Activated T-helper 1 cell treated with anti-CD3 and anti-CD28 coated beads, Interleukin-12 subunit alpha, Interleukin-12 subunit beta, Interleukin-2, Interleukin-4 antibody, amounts not matched to agents 30 ng/mL and 10 ng/mL and 1 ng/mL, durations not matched to agents 14 hours and 24 hours and 36 hours (primary cell): ENCODE measurements at regions of chr11 and their contacts with region 1.

Region 1: DNA sequence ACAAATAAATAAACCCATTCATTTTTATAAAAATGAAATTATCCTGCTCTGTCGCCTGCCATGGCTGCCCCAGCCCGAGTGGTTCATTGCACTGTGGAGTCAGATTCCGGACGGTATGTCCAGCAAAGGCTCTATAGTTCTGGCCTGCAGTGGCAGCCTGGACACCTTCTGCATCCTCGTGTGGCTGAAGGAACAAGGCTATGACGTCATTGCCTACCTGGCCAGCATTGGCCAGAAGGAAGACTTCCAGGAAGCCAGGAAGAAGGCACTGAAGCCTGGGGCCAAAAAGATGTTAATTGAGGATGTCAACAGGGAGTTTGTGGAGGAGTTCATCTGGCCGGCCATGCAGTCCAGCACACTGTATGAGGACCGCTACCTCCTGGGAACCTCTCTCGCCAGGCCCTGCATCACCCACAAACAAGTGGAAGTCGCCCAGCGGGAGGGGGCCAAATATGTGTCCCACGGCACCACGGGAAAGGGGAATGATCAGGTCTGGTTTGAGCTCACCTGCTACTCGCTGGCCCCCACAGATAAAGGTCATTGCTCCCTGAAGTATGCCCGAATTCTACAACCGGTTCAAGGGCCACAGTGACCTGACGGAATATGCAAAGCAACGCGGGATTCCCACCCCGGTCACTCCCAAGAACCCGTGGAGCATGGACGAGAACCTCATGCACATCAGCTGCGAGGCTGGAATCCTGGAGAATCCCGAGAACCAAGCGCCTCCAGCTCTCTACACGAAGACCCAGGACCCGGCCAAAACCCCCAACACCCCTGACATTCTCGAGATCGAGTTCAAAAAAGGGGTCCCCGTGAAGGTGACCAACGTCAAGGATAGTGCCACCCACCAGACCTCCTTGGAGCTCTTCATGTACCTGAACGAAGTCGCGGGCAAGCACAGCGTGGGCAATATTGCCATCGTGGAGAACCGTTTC is 158.2 kb upstream of the GUCY1A2 start:
- DNase-seq: no peak
- H3K4me3 Mint-ChIP-seq: no peak overlapping the region
- H3K27ac Mint-ChIP-seq: no peak overlapping the region
- H3K4me1 Mint-ChIP-seq: no peaks in the 10 kb centered on the region
- H3K27me3 Mint-ChIP-seq: no peaks in the 10 kb centered on the region

Region 2: DNA sequence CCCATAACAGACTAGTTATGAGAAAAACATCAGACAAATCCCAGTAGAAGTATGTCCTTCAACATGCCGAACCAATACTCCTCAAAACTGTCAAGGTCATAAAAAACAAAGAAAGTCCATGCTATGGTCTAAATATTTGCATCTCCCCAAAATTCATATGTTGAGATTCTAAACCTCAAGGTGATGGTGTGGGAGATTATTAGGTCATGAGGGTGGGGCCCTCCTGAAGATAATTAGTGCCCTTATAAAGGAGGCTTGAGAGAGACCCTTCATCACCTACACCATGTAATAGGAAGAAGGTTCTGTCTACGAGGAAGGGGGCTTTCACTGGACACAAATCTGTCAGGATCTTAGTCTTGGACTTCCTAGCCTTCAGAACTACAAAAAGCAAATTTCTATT is 39.5 kb before region 1 on chr11:
- intact Hi-C with region 1: loop called (anchors 1 kb)
- DNase-seq: no peak
- H3K4me3 Mint-ChIP-seq: no peak overlapping the region
- H3K27ac Mint-ChIP-seq: no peak overlapping the region
- H3K4me1 Mint-ChIP-seq: no peaks in the 10 kb centered on the region
- H3K27me3 Mint-ChIP-seq: no peaks in the 10 kb centered on the region